ENCODE measurements at regions of chr14 and their contacts with region 1.

Region 1: DNA sequence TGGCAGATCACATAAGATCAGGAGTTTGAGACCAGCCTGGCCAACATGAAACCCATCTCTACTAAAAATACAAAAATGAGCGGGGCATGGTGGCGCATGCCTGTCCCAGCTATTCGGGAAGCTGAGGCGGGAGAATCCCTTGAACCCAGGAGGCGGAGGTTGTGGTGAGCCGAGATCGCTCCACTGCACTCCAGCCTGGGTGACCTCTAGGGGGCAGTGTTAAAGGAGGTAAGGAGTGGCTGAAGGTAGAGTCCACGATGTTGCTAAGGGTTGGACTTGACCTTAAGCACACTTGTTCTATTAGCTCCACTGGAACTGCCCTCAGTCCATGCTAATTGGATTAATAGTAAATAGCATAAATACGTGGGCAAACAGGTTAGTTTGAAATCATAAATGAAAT is 62.4 kb upstream of the PSMC1 start:
- DNase-seq: peak in 1 of 2 experiments; percentile 77
- H3K4me3 ChIP-seq: no peak overlapping the region
- H3K27ac ChIP-seq: no peak overlapping the region
- H3K4me1 ChIP-seq: no peaks in the 10 kb centered on the region
- H3K27me3 ChIP-seq: no peaks in the 10 kb centered on the region
- CTCF ChIP-seq: peak; percentile 58 to 81 (median 75)
- EP300 ChIP-seq: no peak
- POLR2A ChIP-seq: no peak
- RAD21 ChIP-seq: peak; percentile 44 to 56

Region 2: DNA sequence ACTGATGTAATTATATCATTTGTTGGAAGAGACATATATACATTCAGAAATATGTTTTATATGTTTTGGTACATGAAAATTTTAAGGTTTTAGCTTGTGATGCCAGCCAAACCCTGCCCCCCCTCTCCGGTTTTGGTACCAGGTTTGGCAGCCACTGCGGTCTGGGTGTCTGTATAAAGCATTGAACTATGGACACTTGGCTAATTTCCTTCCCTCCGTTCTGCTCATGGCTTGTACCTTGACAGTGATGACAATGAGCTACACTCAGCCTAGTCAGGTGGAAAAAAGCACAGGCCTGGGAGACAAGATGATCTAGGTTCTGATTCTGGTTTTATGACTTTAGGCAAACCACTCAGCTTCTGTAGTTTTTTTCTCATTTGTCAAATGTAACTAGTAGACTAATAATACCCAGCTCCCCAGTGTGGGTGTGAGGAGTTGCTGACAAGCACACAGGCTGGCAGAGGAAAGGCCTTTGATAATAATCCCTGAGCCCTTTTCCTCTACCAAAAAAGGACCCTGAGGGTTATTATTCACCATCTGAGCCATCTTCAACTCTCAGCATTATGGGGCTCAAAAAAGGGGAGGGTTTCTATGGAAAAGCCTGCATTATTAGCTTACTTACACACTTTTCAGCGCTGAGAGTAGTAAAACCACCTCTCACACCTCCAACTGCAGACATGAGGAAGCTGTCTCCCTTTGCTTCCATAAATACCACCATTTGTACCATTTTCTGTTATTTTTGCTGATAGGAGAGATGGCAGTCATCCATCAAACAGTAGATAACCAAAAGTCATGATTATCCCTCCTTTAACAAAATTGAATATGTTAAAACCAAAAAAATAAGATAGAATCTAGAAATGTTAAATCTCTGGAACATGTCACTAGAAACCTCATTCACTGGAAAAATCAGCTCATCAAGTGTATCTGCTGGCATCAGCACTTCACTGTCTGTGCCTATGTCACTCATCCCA is 13.8 kb before region 1 on chr14:
- CTCF ChIA-PET with region 1: interaction called, 13 read pairs
- POLR2A ChIA-PET with region 1: interaction called, 3 read pairs
- DNase-seq: no peak
- H3K4me3 ChIP-seq: no peak overlapping the region
- H3K27ac ChIP-seq: no peak overlapping the region
- H3K4me1 ChIP-seq: no peaks in the 10 kb centered on the region
- H3K27me3 ChIP-seq: peaks cover 0 to 1% (median 0%) of the 10 kb centered on the region in 4 experiments; a peak in 1 of 7 replicates
- CTCF ChIP-seq: no peak
- EP300 ChIP-seq: no peak
- POLR2A ChIP-seq: no peak
- RAD21 ChIP-seq: no peak

Region 3: GRCh38 chr14:90204516-90204915 is 10.6 kb after region 1 on chr14:
- CTCF ChIA-PET with region 1: interaction called, 32 read pairs
- POLR2A ChIA-PET with region 1: no interaction called
- DNase-seq: no peak
- H3K4me3 ChIP-seq: no peak overlapping the region
- H3K27ac ChIP-seq: no peak overlapping the region
- H3K4me1 ChIP-seq: no peaks in the 10 kb centered on the region; a peak in 1 of 7 replicates
- H3K27me3 ChIP-seq: no peaks in the 10 kb centered on the region
- CTCF ChIP-seq: no peak
- EP300 ChIP-seq: no peak
- POLR2A ChIP-seq: no peak
- RAD21 ChIP-seq: no peak

Region 4: GRCh38 chr14:90235179-90235976 is 41.5 kb after region 1 on chr14:
- CTCF ChIA-PET with region 1: interaction called, 17 read pairs
- POLR2A ChIA-PET with region 1: no interaction called
- DNase-seq: peak; percentile 77 to 95
- H3K4me3 ChIP-seq: no peak overlapping the region; a peak in 2 of 8 replicates
- H3K27ac ChIP-seq: no peak overlapping the region
- H3K4me1 ChIP-seq: no peaks in the 10 kb centered on the region; a peak in 1 of 7 replicates
- H3K27me3 ChIP-seq: peaks cover 4 to 11% (median 7%) of the 10 kb centered on the region in 4 experiments
- CTCF ChIP-seq: peak; percentile 77 to 90 (median 87)
- EP300 ChIP-seq: no peak
- POLR2A ChIP-seq: no peak
- RAD21 ChIP-seq: peak; percentile 94 to 95

Measured in H1 (cell line).